Mammary epithelial cell (primary cell): ENCODE measurements at regions of chr10 and their contacts with region 1.

Region 1: GRCh38 chr10:4241724-4242345 is 456.8 kb upstream of the KLF6 start:
- DNase-seq: peak; percentile 94
- H3K4me3 ChIP-seq: peak overlapping the region; percentile 27 to 51 (median 46)
- H3K27ac ChIP-seq: peak overlapping the region; percentile 97
- H3K4me1 ChIP-seq: peaks cover 47% of the 10 kb centered on the region
- H3K27me3 ChIP-seq: no peaks in the 10 kb centered on the region
- CTCF ChIP-seq: no peak

Region 2: GRCh38 chr10:3805791-3806461 is 435.9 kb before region 1 on chr10:
- CTCF ChIA-PET with region 1: no interaction called
- dilution Hi-C with region 1: loop called (anchors 10 kb)
- in situ Hi-C with region 1: no loop called
- intact Hi-C with region 1: loop called (anchors 2 kb)
- DNase-seq: peak; percentile 90
- H3K4me3 ChIP-seq: no peak overlapping the region
- H3K27ac ChIP-seq: peak overlapping the region; percentile 100
- H3K4me1 ChIP-seq: peaks cover 49% of the 10 kb centered on the region
- H3K27me3 ChIP-seq: no peaks in the 10 kb centered on the region
- CTCF ChIP-seq: no peak

Region 3: DNA sequence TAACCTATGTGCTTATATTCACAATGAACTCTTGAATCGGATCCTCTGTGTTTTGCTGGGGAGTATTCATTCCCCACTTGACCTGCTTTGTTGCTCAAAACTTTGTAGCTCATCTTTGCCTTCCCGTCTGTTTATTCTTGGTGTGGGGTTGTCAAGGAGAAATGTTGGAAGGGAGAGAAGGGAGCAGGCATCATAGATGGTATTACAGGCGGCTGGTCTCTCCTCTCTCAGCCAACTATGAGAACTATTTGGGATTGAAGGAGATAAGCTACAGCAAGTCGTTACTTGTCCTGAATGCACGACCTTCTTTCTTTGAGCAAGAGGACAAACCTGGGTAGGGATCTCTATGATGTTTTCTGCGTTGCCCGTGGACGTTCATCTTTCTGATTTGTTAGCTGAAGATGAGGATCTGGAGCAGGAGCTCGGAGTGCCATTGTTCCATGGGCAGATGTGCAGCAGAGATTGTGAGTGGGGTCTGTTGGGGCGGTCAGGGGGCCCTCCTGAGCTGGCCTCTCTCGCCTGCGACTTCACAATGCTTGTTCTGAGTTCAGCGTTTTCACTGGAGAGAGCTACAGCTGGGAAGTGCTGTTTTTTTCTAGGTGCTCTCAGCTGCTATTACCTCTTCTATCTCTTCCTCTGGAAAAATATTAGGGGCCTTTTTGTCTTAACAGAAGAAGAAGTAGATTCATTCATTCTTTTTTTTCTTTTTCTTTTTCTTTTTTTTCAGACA is 330.0 kb before region 1 on chr10:
- CTCF ChIA-PET with region 1: no interaction called
- dilution Hi-C with region 1: no loop called
- in situ Hi-C with region 1: no loop called
- intact Hi-C with region 1: loop called (anchors 5 kb)
- DNase-seq: peak; percentile 85
- H3K4me3 ChIP-seq: peak overlapping the region; percentile 25 to 38 (median 32)
- H3K27ac ChIP-seq: peak overlapping the region; percentile 93
- H3K4me1 ChIP-seq: peaks cover 14% of the 10 kb centered on the region
- H3K27me3 ChIP-seq: no peaks in the 10 kb centered on the region
- CTCF ChIP-seq: no peak

Region 4: DNA sequence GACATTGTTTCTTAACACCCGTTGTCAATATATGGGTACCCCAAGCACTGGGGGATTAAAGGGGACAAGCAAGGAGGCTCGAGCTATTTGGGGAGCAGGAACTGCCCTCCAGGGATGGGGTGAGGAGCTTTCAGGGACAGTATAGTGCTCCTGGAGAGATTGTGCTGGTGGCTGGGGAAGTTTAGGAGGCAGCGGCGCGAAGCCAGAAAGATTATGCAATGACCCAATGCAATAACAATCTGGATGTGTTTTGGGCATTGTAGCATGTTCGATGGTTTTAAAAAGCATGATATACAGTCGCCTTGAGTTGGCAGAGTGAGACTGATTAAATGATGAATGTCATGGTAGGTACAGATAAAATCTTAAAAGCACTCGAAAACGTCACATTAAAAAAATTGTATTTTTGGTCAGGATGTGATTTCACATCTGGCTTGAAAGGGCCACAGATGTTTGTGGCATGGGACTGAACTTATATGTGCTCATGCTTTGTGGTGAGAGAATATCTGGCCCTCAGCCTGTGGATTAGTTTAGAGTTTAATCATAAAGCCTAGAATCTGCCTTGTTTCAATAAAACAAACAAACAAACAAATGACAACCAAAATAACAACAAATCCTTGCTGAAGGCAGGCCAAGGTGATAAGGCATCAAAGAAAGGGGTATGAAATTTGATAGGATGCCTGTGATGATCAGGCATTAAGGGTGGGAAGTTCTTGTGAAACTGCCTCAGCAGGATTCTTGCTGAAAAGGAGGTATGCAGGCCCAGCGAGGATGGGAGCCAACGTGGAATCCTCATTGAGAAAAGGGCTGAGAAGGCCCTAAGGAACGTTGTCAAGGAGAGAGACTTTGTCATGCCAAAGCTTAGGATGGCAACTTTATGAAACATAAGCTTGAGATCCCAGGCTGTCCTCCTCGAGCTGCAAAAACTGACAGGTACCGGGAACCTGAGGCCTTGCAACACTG is 39.7 kb before region 1 on chr10:
- CTCF ChIA-PET with region 1: no interaction called
- dilution Hi-C with region 1: no loop called
- in situ Hi-C with region 1: no loop called
- intact Hi-C with region 1: no loop called
- DNase-seq: no peak
- H3K4me3 ChIP-seq: no peak overlapping the region
- H3K27ac ChIP-seq: no peak overlapping the region
- H3K4me1 ChIP-seq: peaks cover 6% of the 10 kb centered on the region
- H3K27me3 ChIP-seq: no peaks in the 10 kb centered on the region
- CTCF ChIP-seq: no peak

Region 5: GRCh38 chr10:4270116-4270515 is 28.3 kb after region 1 on chr10:
- CTCF ChIA-PET with region 1: no interaction called
- dilution Hi-C with region 1: no loop called
- in situ Hi-C with region 1: no loop called
- intact Hi-C with region 1: loop called (anchors 2 kb)
- DNase-seq: peak; percentile 75
- H3K4me3 ChIP-seq: no peak overlapping the region
- H3K27ac ChIP-seq: peak overlapping the region; percentile 10
- H3K4me1 ChIP-seq: peaks cover 18% of the 10 kb centered on the region
- H3K27me3 ChIP-seq: no peaks in the 10 kb centered on the region
- CTCF ChIP-seq: no peak

Region 6: DNA sequence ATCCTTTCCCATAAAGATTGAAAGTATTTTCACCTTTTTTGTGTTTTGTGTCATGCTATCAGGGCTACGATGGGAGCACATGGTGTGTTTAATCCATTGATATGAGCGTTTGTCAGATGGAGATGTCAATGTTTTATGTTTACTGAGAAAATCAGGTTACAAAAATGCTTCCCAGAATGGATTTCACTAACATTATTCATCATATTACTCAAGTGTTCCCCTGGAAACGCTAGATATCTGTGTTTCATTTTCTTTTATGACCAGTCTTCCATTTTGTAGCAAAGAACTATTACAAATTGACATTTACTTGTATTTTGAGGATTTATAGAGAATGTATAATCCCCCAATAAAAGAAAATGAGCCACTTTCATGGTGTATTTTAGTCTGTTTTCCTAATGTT is 290.6 kb after region 1 on chr10:
- CTCF ChIA-PET with region 1: no interaction called
- dilution Hi-C with region 1: no loop called
- in situ Hi-C with region 1: no loop called
- intact Hi-C with region 1: loop called (anchors 5 kb)
- DNase-seq: peak; percentile 46
- H3K4me3 ChIP-seq: no peak overlapping the region
- H3K27ac ChIP-seq: peak overlapping the region; percentile 91
- H3K4me1 ChIP-seq: peaks cover 21% of the 10 kb centered on the region
- H3K27me3 ChIP-seq: no peaks in the 10 kb centered on the region
- CTCF ChIP-seq: no peak

Region 7: GRCh38 chr10:4586776-4587175 is 344.9 kb after region 1 on chr10:
- CTCF ChIA-PET with region 1: no interaction called
- dilution Hi-C with region 1: no loop called
- in situ Hi-C with region 1: no loop called
- intact Hi-C with region 1: no loop called
- DNase-seq: no peak
- H3K4me3 ChIP-seq: no peak overlapping the region
- H3K27ac ChIP-seq: no peak overlapping the region
- H3K4me1 ChIP-seq: no peaks in the 10 kb centered on the region
- H3K27me3 ChIP-seq: no peaks in the 10 kb centered on the region
- CTCF ChIP-seq: no peak